Tibial artery (tissue), 4 donors: ENCODE measurements at regions of chr6 and their contacts with region 1.

Region 1: GRCh38 chr6:11585426-11586016 is 48.0 kb downstream of the TMEM170B start:
- DNase-seq: no peak
- H3K4me3 ChIP-seq: no peak overlapping the region
- H3K27ac ChIP-seq: no peak overlapping the region
- H3K4me1 ChIP-seq: peaks cover 0 to 23% (median 9%) of the 10 kb centered on the region in 4 donors
- H3K27me3 ChIP-seq: no peaks in the 10 kb centered on the region
- CTCF ChIP-seq: peak; percentile 58 to 64

Region 2: GRCh38 chr6:11414176-11414963 is 171.2 kb before region 1 on chr6:
- intact Hi-C with region 1: no loop called
- DNase-seq: no peak
- H3K4me3 ChIP-seq: no peak overlapping the region
- H3K27ac ChIP-seq: peak overlapping the region in 1 of 2 donors; percentile 0
- H3K4me1 ChIP-seq: peaks cover 0 to 45% (median 22%) of the 10 kb centered on the region in 4 donors
- H3K27me3 ChIP-seq: no peaks in the 10 kb centered on the region
- CTCF ChIP-seq: no peak

Region 3: GRCh38 chr6:12233693-12234571 is 648.4 kb after region 1 on chr6:
- intact Hi-C with region 1: loop called (anchors 5 kb)
- DNase-seq: no peak
- H3K4me3 ChIP-seq: no peak overlapping the region
- H3K27ac ChIP-seq: no peak overlapping the region
- H3K4me1 ChIP-seq: peaks cover 0 to 8% (median 5%) of the 10 kb centered on the region in 4 donors
- H3K27me3 ChIP-seq: no peaks in the 10 kb centered on the region
- CTCF ChIP-seq: peak; percentile 86 to 90

Region 4: GRCh38 chr6:12890171-12890790 is 1304.8 kb after region 1 on chr6:
- intact Hi-C with region 1: loop called (anchors 10 kb)
- DNase-seq: no peak
- H3K4me3 ChIP-seq: no peak overlapping the region
- H3K27ac ChIP-seq: no peak overlapping the region
- H3K4me1 ChIP-seq: peaks cover 0 to 14% (median under 1%) of the 10 kb centered on the region in 4 donors
- H3K27me3 ChIP-seq: no peaks in the 10 kb centered on the region
- CTCF ChIP-seq: no peak